ENCODE measurements at regions of chr1 and their contacts with region 1.

Region 1: GRCh38 chr1:152459596-152460528 is 45.8 kb upstream of the CRNN start:
- DNase-seq: peak; percentile 85
- H3K4me3 ChIP-seq: peak overlapping the region; percentile 23
- H3K27ac ChIP-seq: no peak overlapping the region
- H3K4me1 ChIP-seq: no peaks in the 10 kb centered on the region
- H3K27me3 ChIP-seq: no peaks in the 10 kb centered on the region; the same call in 1 of the 2 replicates

Region 2: DNA sequence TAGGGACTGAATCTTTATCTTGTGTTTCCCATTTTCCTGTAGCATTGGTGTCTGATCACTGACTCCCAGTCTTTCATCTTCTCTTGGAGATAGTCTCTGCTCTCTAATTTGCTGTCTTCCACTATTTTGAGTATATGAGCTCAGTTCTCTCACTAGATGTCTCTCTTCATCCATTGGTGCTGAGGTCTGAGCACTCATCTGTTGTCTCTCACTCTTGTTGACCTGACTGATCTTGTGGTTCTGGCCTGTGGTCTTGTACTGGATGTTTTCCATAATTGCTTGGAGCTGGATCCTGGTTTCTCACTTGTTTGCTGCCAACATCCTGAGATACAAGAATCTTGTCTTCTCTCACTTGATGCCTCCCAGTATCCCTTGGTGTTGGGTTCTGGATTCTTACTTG is 397.9 kb before region 1 on chr1:
- in situ Hi-C with region 1: loop called (anchors 10 kb)
- DNase-seq: no peak
- H3K4me3 ChIP-seq: no peak overlapping the region
- H3K27ac ChIP-seq: no peak overlapping the region
- H3K4me1 ChIP-seq: no peaks in the 10 kb centered on the region
- H3K27me3 ChIP-seq: peaks cover 67% of the 10 kb centered on the region

Measured in GM23248 (cell line).